Activated CD4-positive, alpha-beta memory T cell treated with anti-CD3 and anti-CD28 coated beads for 36 hours (primary cell): ENCODE measurements at regions of chr7 and their contacts with region 1.

Region 1: DNA sequence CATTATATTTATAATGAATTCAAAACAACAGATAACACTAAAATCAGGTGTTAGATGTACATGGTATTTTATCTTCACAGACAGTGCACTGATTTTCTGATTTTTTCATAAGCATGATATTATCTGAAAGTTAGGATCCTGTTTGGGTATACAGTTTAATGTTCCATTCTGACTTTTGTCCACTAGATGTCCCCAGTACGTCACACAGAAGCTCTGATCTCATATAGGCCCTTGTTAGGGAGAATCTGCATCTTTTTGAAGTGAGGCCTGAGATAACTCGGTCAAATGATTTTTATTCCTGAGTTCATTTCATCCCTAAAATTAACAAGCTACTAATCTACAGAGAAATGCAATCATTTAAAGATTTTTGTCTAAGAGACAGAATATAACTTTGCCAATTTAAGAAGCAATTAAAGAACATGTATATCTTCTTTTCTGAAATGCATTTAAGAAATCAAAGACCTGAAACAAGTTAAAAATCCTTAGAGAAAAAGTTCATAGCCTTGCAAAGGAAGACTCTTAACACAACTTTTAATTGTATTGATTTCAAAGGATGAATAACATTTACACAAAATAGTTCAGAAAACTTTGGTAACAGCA is 72.0 kb upstream of the TES start:
- DNase-seq: no peak
- H3K4me3 Mint-ChIP-seq: no peak overlapping the region
- H3K27ac Mint-ChIP-seq: no peak overlapping the region
- H3K4me1 Mint-ChIP-seq: peaks cover 3% of the 10 kb centered on the region
- H3K27me3 Mint-ChIP-seq: peaks cover 2% of the 10 kb centered on the region

Region 2: DNA sequence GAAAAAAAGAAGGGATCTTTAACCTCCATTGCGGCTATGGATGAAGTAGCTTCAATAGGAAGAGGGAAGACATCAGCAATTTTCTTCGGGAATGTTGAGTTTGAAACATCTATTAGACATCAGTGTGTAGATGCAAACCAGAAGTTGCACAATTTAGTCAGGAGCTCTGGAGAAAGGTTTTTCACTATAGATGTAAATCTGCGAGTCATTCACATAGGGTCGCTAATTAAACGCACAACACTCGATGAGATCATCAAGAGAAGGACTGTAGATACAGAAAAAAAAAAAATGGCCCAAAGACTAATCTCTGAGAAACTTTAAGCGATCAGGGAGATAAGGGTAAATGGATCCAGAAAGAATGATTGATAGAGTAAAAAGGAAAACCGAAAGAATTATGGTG is 10.3 kb after region 1 on chr7:
- CTCF ChIA-PET with region 1: interaction called, 10 read pairs
- POLR2A ChIA-PET with region 1: no interaction called
- intact Hi-C with region 1: no loop called
- DNase-seq: no peak
- H3K4me3 Mint-ChIP-seq: no peak overlapping the region
- H3K27ac Mint-ChIP-seq: no peak overlapping the region
- H3K4me1 Mint-ChIP-seq: peaks cover 9% of the 10 kb centered on the region
- H3K27me3 Mint-ChIP-seq: peaks cover 1% of the 10 kb centered on the region

Region 3: DNA sequence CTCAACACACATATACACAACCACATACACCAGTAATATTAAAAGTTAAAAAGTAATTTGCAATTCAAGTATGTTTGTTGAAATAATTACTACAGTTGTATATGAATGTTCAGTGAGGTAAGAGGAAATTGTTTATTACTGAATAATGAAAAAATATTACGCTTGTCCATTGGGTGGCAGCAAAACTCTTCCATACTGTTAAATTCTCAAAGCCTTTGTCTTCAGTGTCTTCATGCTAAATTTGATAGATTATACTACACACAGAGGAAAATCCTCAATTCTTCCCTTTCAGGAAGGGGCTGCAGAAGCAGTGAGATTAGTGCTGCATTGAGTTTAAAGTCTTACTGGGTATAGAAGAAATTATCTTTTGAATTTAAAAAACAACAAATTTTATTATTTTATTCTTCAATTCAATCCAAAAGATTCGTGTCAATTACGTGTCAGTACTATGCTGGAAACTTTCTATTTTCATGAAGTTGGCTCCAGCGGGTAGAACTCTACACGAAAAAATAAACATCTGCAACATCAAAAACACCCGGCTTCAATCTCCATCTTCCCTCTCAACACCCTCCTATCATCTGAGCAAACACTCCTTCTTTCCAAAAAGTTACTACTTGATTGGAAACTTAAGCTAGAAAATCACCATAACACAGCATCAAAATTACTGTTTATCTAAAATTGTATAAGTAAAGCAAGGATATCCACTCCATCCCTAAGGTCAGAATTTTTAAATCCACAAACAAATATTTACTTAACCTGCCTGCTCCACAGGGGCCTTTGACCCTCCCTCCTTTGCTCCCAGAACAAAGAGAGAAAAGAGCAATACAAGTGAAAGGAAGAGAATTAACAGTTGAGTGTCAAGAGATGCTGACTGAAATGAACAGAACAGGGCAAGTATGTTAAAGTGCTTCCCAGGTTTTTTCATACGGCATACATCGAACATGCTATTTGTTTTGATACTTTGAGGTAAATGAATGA is 35.0 kb after region 1 on chr7:
- CTCF ChIA-PET with region 1: interaction called, 3 read pairs
- POLR2A ChIA-PET with region 1: no interaction called
- intact Hi-C with region 1: loop called (anchors 2 kb)
- DNase-seq: no peak
- H3K4me3 Mint-ChIP-seq: no peak overlapping the region
- H3K27ac Mint-ChIP-seq: no peak overlapping the region
- H3K4me1 Mint-ChIP-seq: no peaks in the 10 kb centered on the region
- H3K27me3 Mint-ChIP-seq: peaks cover 4% of the 10 kb centered on the region